Activated naive CD4-positive, alpha-beta T cell treated with anti-CD3 and anti-CD28 coated beads, Interleukin-2, amount 10 ng/mL, durations not matched to agents 7 days and 5 days (primary cell): ENCODE measurements at regions of chr2 and their contacts with region 1.

Region 1: DNA sequence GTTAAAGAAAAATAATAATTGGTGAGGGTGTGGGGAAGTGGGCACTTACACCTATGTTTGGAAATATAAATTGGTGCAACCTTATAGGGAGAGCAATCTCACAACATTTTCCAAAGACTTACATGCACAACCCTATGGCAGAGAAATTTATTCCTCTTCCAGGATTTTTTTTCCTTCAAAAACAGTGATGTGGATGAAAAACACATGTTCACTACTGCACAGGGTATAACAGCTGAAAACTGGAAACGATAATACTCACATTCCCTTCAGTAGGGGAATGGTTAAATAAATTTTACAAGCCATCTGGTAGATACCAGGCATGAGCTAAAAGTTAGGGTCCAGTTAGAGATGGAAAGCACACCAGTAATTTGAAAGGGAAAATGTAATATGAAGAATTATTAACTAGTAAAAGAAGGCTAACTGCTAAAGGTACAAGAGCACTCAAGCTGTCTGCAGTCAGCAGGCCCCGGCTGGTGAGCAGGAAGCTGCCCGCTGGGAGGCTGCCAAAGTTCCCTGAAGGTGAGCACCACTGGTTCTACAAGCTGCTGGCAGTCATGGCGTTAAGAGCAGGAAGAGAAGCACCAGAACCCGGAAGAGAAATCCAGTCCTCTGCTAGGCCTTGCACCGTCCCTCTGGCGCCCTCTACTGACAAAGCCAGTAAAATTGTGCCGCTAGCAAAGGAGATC is 28.4 kb upstream of the CASP8 start:
- DNase-seq: peak; percentile 95
- H3K4me3 Mint-ChIP-seq: peak overlapping the region; percentile 98
- H3K27ac Mint-ChIP-seq: peak overlapping the region; percentile 97
- H3K4me1 Mint-ChIP-seq: peaks cover 65% of the 10 kb centered on the region
- H3K27me3 Mint-ChIP-seq: no peaks in the 10 kb centered on the region

Region 2: DNA sequence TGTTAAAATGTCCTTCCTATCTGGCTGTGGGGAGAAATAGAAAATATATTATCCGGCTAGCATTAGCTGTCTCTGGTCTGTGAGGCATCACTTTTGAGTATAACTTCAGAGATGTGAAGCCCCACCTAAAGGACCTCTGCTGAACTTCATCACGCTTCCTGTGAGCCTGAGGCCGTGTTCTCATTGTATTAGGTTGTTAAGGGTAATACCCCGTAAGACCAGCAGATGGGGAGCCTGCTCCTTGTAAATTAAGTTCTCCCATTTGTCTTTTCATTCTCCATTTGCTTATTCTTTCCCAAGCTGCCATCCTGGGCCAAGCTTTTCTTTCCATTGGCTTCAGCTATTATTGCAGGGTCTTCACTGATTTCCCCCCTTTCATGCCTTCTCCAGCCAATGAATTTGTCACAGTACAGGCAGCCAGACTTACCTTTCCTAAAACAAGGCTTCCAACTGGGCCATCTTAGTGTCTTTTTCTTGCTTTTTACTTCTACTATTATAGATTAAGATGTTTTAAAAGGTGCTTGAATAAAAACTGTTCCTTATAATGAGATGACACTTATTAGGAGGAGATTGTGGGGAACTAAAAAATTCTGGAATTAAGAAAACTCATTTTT is 330.4 kb before region 1 on chr2:
- CTCF ChIA-PET with region 1: interaction called, 34 read pairs
- DNase-seq: peak; percentile 84
- H3K4me3 Mint-ChIP-seq: no peak overlapping the region
- H3K27ac Mint-ChIP-seq: peak overlapping the region; percentile 75
- H3K4me1 Mint-ChIP-seq: peaks cover 11% of the 10 kb centered on the region
- H3K27me3 Mint-ChIP-seq: no peaks in the 10 kb centered on the region

Region 3: GRCh38 chr2:201158111-201158929 is 73.6 kb before region 1 on chr2:
- CTCF ChIA-PET with region 1: interaction called, 20 read pairs
- DNase-seq: peak; percentile 80
- H3K4me3 Mint-ChIP-seq: no peak overlapping the region
- H3K27ac Mint-ChIP-seq: peak overlapping the region; percentile 78
- H3K4me1 Mint-ChIP-seq: peaks cover 13% of the 10 kb centered on the region
- H3K27me3 Mint-ChIP-seq: no peaks in the 10 kb centered on the region

Region 4: GRCh38 chr2:201182650-201183364 is 49.1 kb before region 1 on chr2 and contains the start of gene CASP10:
- CTCF ChIA-PET with region 1: interaction called, 202 read pairs
- DNase-seq: peak; percentile 51
- H3K4me3 Mint-ChIP-seq: peak within 1 kb of the TSS; percentile 87
- H3K27ac Mint-ChIP-seq: peak within 1 kb of the TSS; percentile 92
- H3K4me1 Mint-ChIP-seq: peaks cover 40% of the 10 kb centered on the region
- H3K27me3 Mint-ChIP-seq: no peaks in the 10 kb centered on the region

Region 5: GRCh38 chr2:201220102-201220570 is 11.8 kb before region 1 on chr2:
- CTCF ChIA-PET with region 1: interaction called, 18 read pairs
- DNase-seq: no peak
- H3K4me3 Mint-ChIP-seq: no peak overlapping the region
- H3K27ac Mint-ChIP-seq: peak overlapping the region; percentile 78
- H3K4me1 Mint-ChIP-seq: peaks cover 60% of the 10 kb centered on the region
- H3K27me3 Mint-ChIP-seq: no peaks in the 10 kb centered on the region

Region 6: DNA sequence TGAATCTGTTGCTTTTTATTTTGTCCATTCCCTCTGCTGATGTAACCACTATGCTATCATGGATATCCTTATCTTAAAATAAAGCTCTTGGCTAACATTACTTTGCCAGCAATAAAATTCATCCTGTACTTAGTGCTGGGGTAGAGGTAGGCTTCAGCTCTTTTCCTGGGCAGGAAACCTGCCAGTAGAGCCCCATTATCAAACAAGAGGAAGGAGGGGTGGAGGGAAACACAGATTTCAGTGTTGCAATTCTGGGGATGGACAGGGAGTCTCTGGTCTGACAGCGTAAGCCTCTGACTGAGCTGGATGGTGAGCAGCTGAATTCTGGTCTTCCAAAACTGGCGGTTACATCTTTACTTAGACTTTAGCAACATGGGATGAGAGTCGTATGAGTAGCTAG is 76.0 kb after region 1 on chr2:
- CTCF ChIA-PET with region 1: no interaction called
- DNase-seq: no peak
- H3K4me3 Mint-ChIP-seq: no peak overlapping the region
- H3K27ac Mint-ChIP-seq: no peak overlapping the region
- H3K4me1 Mint-ChIP-seq: no peaks in the 10 kb centered on the region
- H3K27me3 Mint-ChIP-seq: no peaks in the 10 kb centered on the region

Region 7: DNA sequence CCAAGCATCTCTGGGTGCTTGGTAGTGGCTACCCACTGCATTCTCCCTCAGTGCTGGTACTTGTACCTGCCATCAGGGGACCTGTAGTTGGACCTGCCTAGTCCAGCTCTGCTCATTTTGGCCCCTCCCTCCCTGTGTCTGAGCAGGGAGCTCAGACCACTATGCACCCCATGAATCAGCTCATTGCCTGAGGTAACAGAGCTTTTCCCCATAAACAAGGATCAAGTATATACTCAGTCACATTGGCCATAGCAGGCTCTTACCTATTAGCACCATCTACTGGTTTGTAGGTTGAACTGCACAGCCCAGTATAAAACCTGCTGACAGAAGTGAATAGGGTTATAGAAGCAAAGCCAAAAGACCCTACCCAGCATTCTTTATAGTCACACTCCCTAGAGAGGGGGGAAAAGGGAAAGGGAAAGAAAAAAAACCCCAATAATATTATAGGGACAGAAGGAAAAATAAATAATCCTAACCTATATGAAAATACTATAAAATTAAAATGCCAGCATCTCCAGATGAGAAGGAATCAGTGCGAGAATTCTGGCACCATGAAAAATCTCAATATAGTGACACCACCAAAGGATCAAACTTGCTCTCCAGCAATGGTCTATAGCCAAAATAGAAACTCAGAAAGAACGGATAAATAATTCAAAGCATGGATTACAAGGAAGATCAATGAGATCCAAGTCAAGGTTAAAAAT is 132.1 kb after region 1 on chr2:
- CTCF ChIA-PET with region 1: interaction called, 40 read pairs
- DNase-seq: no peak
- H3K4me3 Mint-ChIP-seq: no peak overlapping the region
- H3K27ac Mint-ChIP-seq: peak overlapping the region; percentile 60
- H3K4me1 Mint-ChIP-seq: peaks cover 34% of the 10 kb centered on the region
- H3K27me3 Mint-ChIP-seq: no peaks in the 10 kb centered on the region

Region 8: DNA sequence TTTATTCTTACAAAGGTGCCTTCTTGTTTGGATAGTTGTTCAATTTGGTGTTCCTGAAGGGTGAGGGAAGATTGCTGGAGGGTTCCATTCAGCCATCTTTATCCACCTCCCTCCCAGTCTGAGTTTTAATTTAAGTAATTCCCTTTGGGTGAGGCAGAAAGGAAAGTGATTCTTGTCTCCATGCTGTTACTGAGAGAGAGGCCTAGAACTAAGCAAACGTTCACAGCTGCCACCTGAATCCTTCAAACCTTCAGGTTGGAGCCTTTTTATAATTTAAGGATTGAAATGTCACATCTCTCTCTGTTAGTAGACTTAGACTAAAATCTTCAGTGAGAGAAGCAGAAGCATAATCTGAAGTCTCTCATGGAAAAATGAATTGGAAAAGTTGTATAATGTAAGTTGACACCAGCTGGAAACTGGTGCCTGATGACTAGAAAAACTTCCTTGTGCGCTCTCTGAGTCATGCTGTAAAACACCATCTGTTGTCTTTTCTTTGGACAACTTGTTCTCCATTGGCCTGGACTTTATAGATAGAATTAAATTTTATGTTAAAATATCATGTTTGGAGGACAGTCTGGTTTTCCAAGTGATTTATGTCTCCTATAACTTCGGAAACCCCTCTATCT is 234.2 kb after region 1 on chr2:
- CTCF ChIA-PET with region 1: no interaction called
- DNase-seq: no peak
- H3K4me3 Mint-ChIP-seq: no peak overlapping the region
- H3K27ac Mint-ChIP-seq: no peak overlapping the region
- H3K4me1 Mint-ChIP-seq: peaks cover 3% of the 10 kb centered on the region
- H3K27me3 Mint-ChIP-seq: no peaks in the 10 kb centered on the region